H1 (cell line): ENCODE measurements at regions of chr19 and their contacts with region 1.

Region 1: GRCh38 chr19:15161028-15161989 is 39.5 kb downstream of the NOTCH3 start:
- DNase-seq: no peak
- H3K4me3 ChIP-seq: no peak overlapping the region
- H3K27ac ChIP-seq: no peak overlapping the region
- H3K4me1 ChIP-seq: no peaks in the 10 kb centered on the region
- H3K27me3 ChIP-seq: no peaks in the 10 kb centered on the region
- CTCF ChIP-seq: peak in 2 of 3 experiments; percentile 19 to 22; a peak in 2 of 4 replicates
- EP300 ChIP-seq: no peak
- POLR2A ChIP-seq: no peak
- RAD21 ChIP-seq: peak in 1 of 2 experiments; percentile 46; a peak in 2 of 4 replicates

Region 2: DNA sequence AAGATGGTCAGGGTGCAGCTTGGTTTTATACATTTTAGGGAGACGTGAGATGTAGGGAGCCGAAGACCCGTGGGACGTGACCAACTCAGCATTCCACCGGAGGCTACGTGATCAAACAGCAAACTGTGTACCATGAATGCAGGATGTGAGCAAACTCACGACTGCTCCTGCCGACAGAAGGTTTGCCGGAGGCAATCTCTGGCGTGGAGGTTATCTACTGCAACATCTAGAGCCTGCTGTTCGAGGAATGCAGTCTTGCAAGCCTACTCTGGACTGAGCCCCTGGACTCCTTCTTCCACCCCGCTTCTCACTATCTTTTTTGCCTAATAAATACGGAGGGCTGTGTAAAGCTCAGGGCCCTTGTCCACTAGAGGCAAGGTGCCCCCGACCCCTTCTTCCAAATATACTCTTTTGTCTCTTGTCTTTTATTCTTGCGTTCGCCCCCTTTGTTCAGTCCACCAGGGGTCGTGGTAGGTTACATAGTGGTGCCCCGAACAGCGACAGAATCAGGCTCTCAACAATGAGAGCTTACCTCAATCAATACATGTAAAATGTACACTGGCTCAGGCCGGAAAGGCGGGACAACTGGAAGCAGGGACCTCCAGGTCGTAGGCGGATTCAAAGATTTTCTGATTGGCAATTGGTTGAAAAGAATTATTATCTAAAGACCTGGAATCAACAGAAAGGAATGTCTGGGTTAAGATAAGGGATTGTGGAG is 88.2 kb before region 1 on chr19:
- CTCF ChIA-PET with region 1: no interaction called
- POLR2A ChIA-PET with region 1: no interaction called
- DNase-seq: peak in 1 of 2 experiments; percentile 45
- H3K4me3 ChIP-seq: no peak overlapping the region
- H3K27ac ChIP-seq: no peak overlapping the region
- H3K4me1 ChIP-seq: no peaks in the 10 kb centered on the region
- H3K27me3 ChIP-seq: no peaks in the 10 kb centered on the region
- CTCF ChIP-seq: peak in 2 of 3 experiments; percentile 20 to 26; a peak in 2 of 4 replicates
- EP300 ChIP-seq: no peak
- POLR2A ChIP-seq: no peak
- RAD21 ChIP-seq: peak; percentile 10 to 15; a peak in 1 of 4 replicates

Region 3: DNA sequence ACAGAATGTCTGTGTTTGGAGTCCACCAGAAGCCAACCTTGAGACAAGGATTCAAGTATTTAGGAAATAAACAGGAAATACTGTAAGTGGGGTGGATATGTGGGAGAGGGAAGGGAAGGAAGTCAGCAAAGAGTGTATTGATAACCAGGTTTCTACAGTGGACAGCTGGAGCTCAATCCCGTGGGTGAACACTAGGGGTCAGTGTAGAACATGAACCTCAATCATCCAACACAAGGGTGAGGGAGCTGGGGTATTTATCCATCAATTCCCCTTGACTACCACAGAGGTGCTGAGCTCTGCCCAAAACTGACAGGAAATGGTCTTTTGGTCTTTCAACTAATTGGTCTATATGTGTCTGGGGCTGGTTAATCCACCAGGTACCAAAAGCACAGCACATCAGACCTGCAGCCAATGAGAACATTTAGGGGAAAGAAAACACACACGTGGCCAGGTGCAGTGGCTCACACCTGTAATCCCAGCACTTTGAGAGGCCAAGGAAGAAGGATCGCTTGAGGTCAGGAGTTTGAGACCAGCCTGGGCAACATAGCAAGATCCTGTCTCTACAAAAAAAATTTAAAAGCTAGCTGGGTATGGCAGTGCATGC is 59.7 kb before region 1 on chr19:
- CTCF ChIA-PET with region 1: interaction called, 19 read pairs
- POLR2A ChIA-PET with region 1: no interaction called
- DNase-seq: peak in 1 of 2 experiments; percentile 87
- H3K4me3 ChIP-seq: no peak overlapping the region
- H3K27ac ChIP-seq: no peak overlapping the region
- H3K4me1 ChIP-seq: no peaks in the 10 kb centered on the region
- H3K27me3 ChIP-seq: no peaks in the 10 kb centered on the region
- CTCF ChIP-seq: peak; percentile 56 to 87 (median 74)
- EP300 ChIP-seq: no peak
- POLR2A ChIP-seq: no peak
- RAD21 ChIP-seq: peak; percentile 67 to 68